Mucosa of descending colon (tissue), 3 donors: ENCODE measurements at regions of chr1 and their contacts with region 1.

Region 1: GRCh38 chr1:185044981-185045813 is at the start of gene RNF2:
- DNase-seq: peak; percentile 81 to 88 (median 87)
- ATAC-seq: peak; percentile 95
- H3K4me3 ChIP-seq: peak within 1 kb of the TSS; percentile 74
- H3K4me1 ChIP-seq: peaks cover 8% of the 10 kb centered on the region
- CTCF ChIP-seq: no peak
- total RNA-seq, gene RNF2: 14.1 to 19.3 (median 15.6) TPM

Region 2: GRCh38 chr1:185156854-185157598 is 111.8 kb after region 1 on chr1 and contains the starts of genes SWT1 and TRMT1L:
- intact Hi-C with region 1: loop called in 1 of 2 experiments (anchors 10 kb)
- DNase-seq: peak; percentile 99 to 100 (median 100)
- ATAC-seq: peak; percentile 93
- H3K4me3 ChIP-seq: peak within 1 kb of the TSS; percentile 46
- H3K4me1 ChIP-seq: peaks cover 14% of the 10 kb centered on the region
- CTCF ChIP-seq: no peak
- total RNA-seq, gene SWT1: 5.4 to 7.7 (median 5.7) TPM
- total RNA-seq, gene TRMT1L: 16.3 to 22.9 (median 19.1) TPM